Gastrocnemius medialis (tissue), 4 donors: ENCODE measurements at regions of chr19 and their contacts with region 1.

Region 1: GRCh38 chr19:4342615-4343369 is 570 bp upstream of the MPND start:
- DNase-seq: peak; percentile 98 to 99
- ATAC-seq: peak; percentile 97 to 98
- H3K4me3 ChIP-seq: peak overlapping the region; percentile 64 to 78 (median 68)
- H3K27ac ChIP-seq: peak overlapping the region; percentile 89 to 96 (median 94)
- H3K4me1 ChIP-seq: peaks cover 10 to 20% of the 10 kb centered on the region in 2 donors
- H3K27me3 ChIP-seq: no peaks in the 10 kb centered on the region
- CTCF ChIP-seq: peak in 1 of 5 experiments; percentile 16
- POLR2A ChIP-seq: peak; percentile 73 to 85

Region 2: GRCh38 chr19:4246767-4247593 is 95.8 kb before region 1 on chr19 and contains the start of gene YJU2:
- in situ Hi-C with region 1: no loop called
- intact Hi-C with region 1: loop called (anchors 1 kb)
- DNase-seq: peak; percentile 98 to 99
- ATAC-seq: peak; percentile 99
- H3K4me3 ChIP-seq: peak within 1 kb of the TSS; percentile 57 to 87 (median 76)
- H3K27ac ChIP-seq: peak within 1 kb of the TSS; percentile 85 to 99 (median 95)
- H3K4me1 ChIP-seq: peaks cover 7 to 11% of the 10 kb centered on the region in 2 donors
- H3K27me3 ChIP-seq: peaks cover 0 to 3% (median 0%) of the 10 kb centered on the region in 3 donors
- CTCF ChIP-seq: peak in 4 of 5 experiments; percentile 23 to 38 (median 34)
- POLR2A ChIP-seq: peak; percentile 36 to 42
- total RNA-seq, gene YJU2: 13.5 to 37.8 (median 19.9) TPM

Region 3: GRCh38 chr19:4328243-4328990 is 14.4 kb before region 1 on chr19:
- in situ Hi-C with region 1: no loop called
- intact Hi-C with region 1: loop called (anchors 1 kb)
- DNase-seq: peak; percentile 51 to 90
- ATAC-seq: peak; percentile 77 to 87
- H3K4me3 ChIP-seq: peak overlapping the region; percentile 28 to 54 (median 48)
- H3K27ac ChIP-seq: peak overlapping the region in 2 of 4 donors; percentile 37 to 54
- H3K4me1 ChIP-seq: peaks cover 0 to 13% of the 10 kb centered on the region in 2 donors
- H3K27me3 ChIP-seq: peaks cover 11 to 17% (median 16%) of the 10 kb centered on the region in 3 donors
- CTCF ChIP-seq: no peak
- POLR2A ChIP-seq: peak in 1 of 2 donors; percentile 8

Region 4: GRCh38 chr19:4369888-4370260 is 27.1 kb after region 1 on chr19:
- in situ Hi-C with region 1: no loop called
- intact Hi-C with region 1: loop called (anchors 2 kb)
- DNase-seq: peak in 1 of 2 donors; percentile 68
- ATAC-seq: peak in 1 of 2 donors; percentile 31
- H3K4me3 ChIP-seq: peak overlapping the region in 3 of 4 donors; percentile 6 to 30 (median 27)
- H3K27ac ChIP-seq: peak overlapping the region; percentile 83 to 95 (median 92)
- H3K4me1 ChIP-seq: peaks cover 74 to 82% of the 10 kb centered on the region in 2 donors
- H3K27me3 ChIP-seq: no peaks in the 10 kb centered on the region
- CTCF ChIP-seq: peak; percentile 31 to 65 (median 61)
- POLR2A ChIP-seq: no peak

Region 5: GRCh38 chr19:4457654-4458395 is 115.0 kb after region 1 on chr19 and contains the start of gene UBXN6:
- in situ Hi-C with region 1: no loop called
- intact Hi-C with region 1: loop called (anchors 10 kb)
- DNase-seq: peak; percentile 96 to 97
- ATAC-seq: peak; percentile 86
- H3K4me3 ChIP-seq: peak within 1 kb of the TSS; percentile 56 to 90 (median 68)
- H3K27ac ChIP-seq: peak within 1 kb of the TSS; percentile 90 to 99 (median 95)
- H3K4me1 ChIP-seq: peaks cover 24 to 29% of the 10 kb centered on the region in 2 donors
- H3K27me3 ChIP-seq: no peaks in the 10 kb centered on the region
- CTCF ChIP-seq: peak in 2 of 5 experiments; percentile 8 to 34
- POLR2A ChIP-seq: no peak
- total RNA-seq, gene UBXN6: 93.8 to 230 (median 114) TPM

Region 6: DNA sequence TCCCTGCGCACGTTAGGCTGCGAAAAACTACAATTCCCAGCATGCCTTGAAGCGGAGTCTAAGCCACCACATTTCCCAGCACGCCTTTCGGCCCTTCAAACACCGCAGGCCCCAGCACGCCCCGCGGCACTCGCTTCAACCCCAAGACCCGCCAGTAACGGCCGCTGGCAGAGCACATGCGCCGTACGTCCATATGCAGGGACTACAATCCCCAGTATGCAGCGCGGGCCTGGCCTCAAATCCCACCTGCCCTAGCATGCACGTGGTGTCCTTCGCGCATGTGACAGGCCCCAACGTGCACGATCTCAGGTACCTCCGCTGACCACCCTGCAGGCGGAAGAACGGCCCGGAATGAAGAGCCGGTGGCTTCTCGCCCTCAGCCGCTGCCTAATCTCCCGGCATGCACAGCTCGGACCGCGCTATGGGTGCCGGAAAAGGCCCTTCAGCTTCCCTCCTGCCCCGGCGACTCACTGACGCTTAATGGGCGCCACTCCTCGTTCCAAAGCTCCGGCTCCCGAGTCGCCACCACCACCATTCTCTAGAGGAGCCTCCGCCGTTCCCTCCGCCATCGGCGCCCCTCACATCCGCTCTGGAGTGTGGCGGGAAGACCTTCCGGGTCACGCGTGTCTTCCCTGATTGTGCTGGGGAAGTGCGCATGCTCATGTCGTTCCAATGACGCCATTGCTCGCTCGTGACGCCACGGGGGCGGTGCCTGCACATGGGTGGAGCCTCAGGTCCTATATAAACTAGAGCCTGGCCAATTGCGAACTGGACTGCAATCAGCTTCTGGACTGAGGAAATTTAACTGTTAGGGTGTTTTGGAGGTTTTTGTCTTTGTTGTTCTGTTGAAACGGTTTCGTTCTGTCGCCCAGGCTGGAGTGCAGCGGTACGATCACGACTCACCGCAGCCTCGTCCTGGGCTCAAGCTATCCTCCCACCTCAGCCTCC is 1448.1 kb after region 1 on chr19 and contains the start of gene DUS3L:
- in situ Hi-C with region 1: no loop called
- intact Hi-C with region 1: loop called (anchors 2 kb)
- DNase-seq: peak; percentile 96 to 98
- ATAC-seq: peak; percentile 95 to 96
- H3K4me3 ChIP-seq: peak within 1 kb of the TSS; percentile 78 to 94 (median 86)
- H3K27ac ChIP-seq: peak within 1 kb of the TSS; percentile 96 to 99 (median 98)
- H3K4me1 ChIP-seq: peaks cover 7 to 8% of the 10 kb centered on the region in 2 donors
- H3K27me3 ChIP-seq: peaks cover 0 to 4% (median 0%) of the 10 kb centered on the region in 3 donors
- CTCF ChIP-seq: peak in 1 of 5 experiments; percentile 24
- POLR2A ChIP-seq: peak; percentile 72 to 73
- total RNA-seq, gene DUS3L: 19.5 to 45.9 (median 25.0) TPM